CD8-positive, alpha-beta T cell (primary cell): ENCODE measurements at regions of chr5 and their contacts with region 1.

Region 1: GRCh38 chr5:37916525-37916924 is 76.7 kb upstream of the GDNF start:
- DNase-seq: no peak
- ATAC-seq: no peak
- H3K4me3 ChIP-seq: no peak overlapping the region
- H3K4me3 Mint-ChIP-seq: no peak overlapping the region
- H3K27ac ChIP-seq: no peak overlapping the region
- H3K27ac Mint-ChIP-seq: no peak overlapping the region
- H3K4me1 ChIP-seq: no peaks in the 10 kb centered on the region
- H3K4me1 Mint-ChIP-seq: no peaks in the 10 kb centered on the region
- H3K27me3 ChIP-seq: no peaks in the 10 kb centered on the region
- H3K27me3 Mint-ChIP-seq: peaks cover 13% of the 10 kb centered on the region
- CTCF ChIP-seq: no peak

Region 2: GRCh38 chr5:37740331-37741066 is 176.0 kb before region 1 on chr5:
- CTCF ChIA-PET with region 1: no interaction called
- POLR2A ChIA-PET with region 1: no interaction called
- intact Hi-C with region 1: no loop called
- DNase-seq: no peak
- ATAC-seq: no peak
- H3K4me3 ChIP-seq: no peak overlapping the region
- H3K4me3 Mint-ChIP-seq: no peak overlapping the region
- H3K27ac ChIP-seq: no peak overlapping the region
- H3K27ac Mint-ChIP-seq: no peak overlapping the region
- H3K4me1 ChIP-seq: no peaks in the 10 kb centered on the region
- H3K4me1 Mint-ChIP-seq: peaks cover 8% of the 10 kb centered on the region
- H3K27me3 ChIP-seq: no peaks in the 10 kb centered on the region
- H3K27me3 Mint-ChIP-seq: no peaks in the 10 kb centered on the region
- CTCF ChIP-seq: no peak

Region 3: DNA sequence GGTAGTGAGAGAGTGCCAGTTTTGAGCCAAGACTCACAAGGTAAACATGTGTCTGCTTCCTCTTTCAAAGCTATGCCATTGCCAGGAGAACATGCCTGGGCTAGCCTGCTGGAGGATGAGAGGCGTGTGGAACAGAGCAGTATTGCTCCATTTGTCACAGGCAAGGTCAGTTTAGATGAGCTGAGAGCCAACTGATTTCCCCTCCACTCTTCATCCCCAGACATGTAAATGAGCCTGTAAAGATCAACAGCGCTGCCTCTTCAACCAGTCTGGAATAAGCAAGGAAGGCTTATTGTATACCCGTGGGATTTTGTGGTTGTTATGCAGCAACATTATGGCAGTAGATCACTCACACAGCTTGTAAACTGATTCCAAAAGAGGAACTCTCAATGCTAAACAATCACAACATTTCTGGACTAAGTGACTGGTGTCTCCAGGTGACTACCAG is 68.5 kb before region 1 on chr5:
- CTCF ChIA-PET with region 1: no interaction called
- POLR2A ChIA-PET with region 1: no interaction called
- intact Hi-C with region 1: loop called in 1 of 2 experiments (anchors 2 kb)
- DNase-seq: no peak
- ATAC-seq: no peak
- H3K4me3 ChIP-seq: no peak overlapping the region
- H3K4me3 Mint-ChIP-seq: no peak overlapping the region
- H3K27ac ChIP-seq: no peak overlapping the region
- H3K27ac Mint-ChIP-seq: no peak overlapping the region
- H3K4me1 ChIP-seq: no peaks in the 10 kb centered on the region
- H3K4me1 Mint-ChIP-seq: no peaks in the 10 kb centered on the region
- H3K27me3 ChIP-seq: no peaks in the 10 kb centered on the region
- H3K27me3 Mint-ChIP-seq: peaks cover 20% of the 10 kb centered on the region
- CTCF ChIP-seq: no peak

Region 4: GRCh38 chr5:37952021-37952721 is 35.6 kb after region 1 on chr5:
- CTCF ChIA-PET with region 1: no interaction called
- POLR2A ChIA-PET with region 1: no interaction called
- intact Hi-C with region 1: no loop called
- DNase-seq: no peak
- ATAC-seq: no peak
- H3K4me3 ChIP-seq: no peak overlapping the region
- H3K4me3 Mint-ChIP-seq: no peak overlapping the region
- H3K27ac ChIP-seq: no peak overlapping the region
- H3K27ac Mint-ChIP-seq: no peak overlapping the region
- H3K4me1 ChIP-seq: no peaks in the 10 kb centered on the region
- H3K4me1 Mint-ChIP-seq: no peaks in the 10 kb centered on the region
- H3K27me3 ChIP-seq: no peaks in the 10 kb centered on the region
- H3K27me3 Mint-ChIP-seq: no peaks in the 10 kb centered on the region
- CTCF ChIP-seq: no peak